Activated CD8-positive, alpha-beta memory T cell treated with anti-CD3 and anti-CD28 coated beads, Interleukin-2, amount 10 ng/mL, durations not matched to agents 7 days and 5 days (primary cell): ENCODE measurements at regions of chr4 and their contacts with region 1.

Region 1: DNA sequence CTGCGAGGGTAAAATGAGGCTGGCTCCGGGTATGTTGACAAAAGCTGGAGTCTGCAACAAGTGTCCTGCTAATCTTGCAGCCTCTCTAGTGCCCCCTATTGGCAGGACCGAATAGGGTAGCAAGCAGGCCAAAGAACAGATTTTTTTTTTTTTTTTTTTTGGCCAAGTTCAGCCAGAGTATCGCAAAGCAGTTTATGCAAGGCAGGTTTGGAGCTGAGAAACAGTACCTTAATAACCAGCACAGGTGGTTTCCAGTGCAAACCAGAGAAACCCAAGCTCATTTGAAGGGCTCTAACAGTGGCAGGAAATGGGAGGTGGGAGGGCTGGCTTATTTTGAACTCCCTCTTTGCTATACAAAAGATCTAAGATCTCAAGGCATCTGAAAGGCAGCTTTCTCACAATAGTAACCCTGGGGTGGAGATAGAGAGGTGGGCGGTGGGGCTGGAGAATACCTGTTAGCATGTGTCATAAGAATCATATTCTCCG is 38.2 kb upstream of the OCIAD2 start:
- DNase-seq: peak; percentile 71
- ATAC-seq: peak; percentile 42
- H3K4me3 Mint-ChIP-seq: no peak overlapping the region
- H3K27ac Mint-ChIP-seq: no peak overlapping the region
- H3K4me1 Mint-ChIP-seq: peaks cover 7% of the 10 kb centered on the region
- H3K27me3 Mint-ChIP-seq: peaks cover 12% of the 10 kb centered on the region

Region 2: DNA sequence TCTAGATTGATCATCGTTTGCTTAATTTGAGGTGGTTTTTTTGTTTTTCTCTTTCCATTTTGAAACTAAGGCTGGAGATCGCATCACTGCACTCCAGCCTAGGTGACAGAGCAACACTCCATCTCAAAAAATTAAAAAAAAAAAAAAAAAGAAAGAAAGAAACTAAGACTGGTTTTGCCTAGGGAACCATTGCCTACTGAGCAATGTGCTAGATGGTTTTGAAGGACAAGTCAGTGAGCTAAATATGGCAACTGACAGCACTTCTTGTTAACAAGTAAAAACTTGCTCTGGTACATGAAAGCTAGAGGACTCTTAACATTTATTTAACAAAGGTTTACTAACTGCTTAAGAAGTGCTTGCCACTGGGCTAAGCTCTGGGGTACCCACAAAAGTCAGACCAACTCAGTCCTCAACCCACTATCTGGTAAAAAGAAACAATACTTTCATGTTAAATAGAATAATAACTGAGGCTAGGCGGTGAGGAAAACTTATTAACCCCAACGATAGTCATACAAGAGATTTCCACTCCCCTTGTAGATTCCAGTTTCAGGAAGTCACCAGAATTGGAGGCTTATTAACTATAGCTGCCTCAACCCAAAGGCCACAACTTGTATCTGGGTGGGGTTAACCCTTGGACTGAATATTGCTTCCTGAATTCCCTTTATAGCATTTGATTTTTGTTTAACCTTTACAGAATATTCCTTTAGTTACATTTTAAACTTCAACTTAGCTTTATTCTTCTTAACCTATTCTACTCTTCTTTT is 276.4 kb before region 1 on chr4:
- CTCF ChIA-PET with region 1: no interaction called
- DNase-seq: no peak
- ATAC-seq: no peak
- H3K4me3 Mint-ChIP-seq: no peak overlapping the region
- H3K27ac Mint-ChIP-seq: no peak overlapping the region
- H3K4me1 Mint-ChIP-seq: peaks cover 19% of the 10 kb centered on the region
- H3K27me3 Mint-ChIP-seq: no peaks in the 10 kb centered on the region

Region 3: GRCh38 chr4:48841045-48841827 is 103.6 kb before region 1 on chr4:
- CTCF ChIA-PET with region 1: no interaction called
- DNase-seq: no peak
- ATAC-seq: no peak
- H3K4me3 Mint-ChIP-seq: no peak overlapping the region
- H3K27ac Mint-ChIP-seq: no peak overlapping the region
- H3K4me1 Mint-ChIP-seq: peaks cover 6% of the 10 kb centered on the region
- H3K27me3 Mint-ChIP-seq: no peaks in the 10 kb centered on the region

Region 4: DNA sequence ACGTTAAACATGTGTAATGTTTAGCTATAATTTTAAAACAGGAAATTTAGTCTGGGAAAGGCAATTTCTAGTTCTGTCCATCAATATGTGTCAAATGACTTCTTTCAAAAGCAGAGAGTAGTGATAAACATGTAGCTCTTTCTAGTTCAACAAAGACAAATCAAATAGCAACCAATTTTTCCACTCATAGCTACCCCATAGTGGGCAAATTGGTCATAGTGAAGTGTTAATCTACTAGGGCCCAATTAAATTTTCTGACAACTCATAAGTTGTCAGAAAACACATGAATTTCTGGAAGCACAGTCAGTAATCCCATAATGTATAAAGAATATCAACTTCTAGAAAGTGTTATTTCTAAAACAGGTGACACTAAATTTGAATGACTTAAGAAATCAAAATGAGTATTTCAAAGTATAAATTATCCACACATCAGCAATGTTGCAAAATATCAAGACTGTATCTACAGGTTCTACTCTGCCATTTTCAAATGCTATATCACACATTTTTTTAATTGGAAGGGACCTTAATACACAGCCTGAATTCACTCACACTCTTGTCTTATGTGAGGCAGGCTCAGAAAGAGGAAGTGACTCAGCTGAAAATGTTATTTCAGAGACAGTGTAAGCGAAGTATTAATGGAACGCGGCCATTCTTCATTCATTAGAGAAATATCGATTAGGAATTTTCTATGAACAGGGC is 45.9 kb before region 1 on chr4:
- CTCF ChIA-PET with region 1: no interaction called
- DNase-seq: no peak
- ATAC-seq: no peak
- H3K4me3 Mint-ChIP-seq: no peak overlapping the region
- H3K27ac Mint-ChIP-seq: no peak overlapping the region
- H3K4me1 Mint-ChIP-seq: peaks cover 12% of the 10 kb centered on the region
- H3K27me3 Mint-ChIP-seq: no peaks in the 10 kb centered on the region

Region 5: GRCh38 chr4:48963042-48963679 is 18.4 kb after region 1 on chr4:
- CTCF ChIA-PET with region 1: interaction called, 19 read pairs
- DNase-seq: peak; percentile 83
- ATAC-seq: peak; percentile 84
- H3K4me3 Mint-ChIP-seq: no peak overlapping the region
- H3K27ac Mint-ChIP-seq: no peak overlapping the region
- H3K4me1 Mint-ChIP-seq: no peaks in the 10 kb centered on the region
- H3K27me3 Mint-ChIP-seq: peaks cover 2% of the 10 kb centered on the region